PC-9 (cell line): ENCODE measurements at regions of chr4 and their contacts with region 1.

Region 1: DNA sequence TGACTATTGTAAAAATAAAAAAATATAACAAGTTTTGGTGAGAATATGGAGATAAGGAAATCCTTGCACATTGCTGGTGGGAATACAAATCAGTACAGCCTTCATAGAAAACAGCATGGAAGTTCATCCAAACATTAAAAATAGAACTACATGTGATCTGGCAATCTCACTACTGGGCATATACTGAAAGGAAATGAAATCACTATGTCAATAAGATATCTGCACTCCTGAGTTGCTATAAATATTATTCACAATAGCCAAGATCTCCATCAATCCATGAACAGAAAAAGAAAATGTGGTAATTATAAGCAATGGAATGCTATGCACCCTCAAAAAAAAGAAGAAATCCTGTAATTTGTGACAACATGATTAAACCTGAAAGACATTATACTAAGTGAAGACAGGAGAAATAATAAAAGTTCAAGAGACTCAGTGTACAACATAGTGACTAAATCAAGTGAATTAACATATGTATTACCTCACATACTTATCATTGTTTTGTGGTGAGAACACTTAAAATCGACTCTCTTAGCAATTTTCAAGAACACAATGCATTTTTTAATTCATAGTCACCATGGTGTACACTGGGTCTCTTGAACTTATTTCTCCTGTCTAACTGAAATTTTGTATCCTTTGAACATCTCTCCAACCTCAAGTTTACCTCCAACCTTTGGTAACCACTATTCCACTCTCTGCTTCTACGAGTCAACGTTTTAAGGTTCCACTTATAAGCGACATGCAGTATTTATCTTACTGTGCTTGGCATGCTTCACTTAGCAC is 1703.7 kb upstream of the AGA start:
- DNase-seq: no peak
- H3K4me3 ChIP-seq: no peak overlapping the region
- H3K27ac ChIP-seq: no peak overlapping the region
- H3K4me1 ChIP-seq: no peaks in the 10 kb centered on the region
- H3K27me3 ChIP-seq: no peaks in the 10 kb centered on the region
- CTCF ChIP-seq: no peak

Region 2: DNA sequence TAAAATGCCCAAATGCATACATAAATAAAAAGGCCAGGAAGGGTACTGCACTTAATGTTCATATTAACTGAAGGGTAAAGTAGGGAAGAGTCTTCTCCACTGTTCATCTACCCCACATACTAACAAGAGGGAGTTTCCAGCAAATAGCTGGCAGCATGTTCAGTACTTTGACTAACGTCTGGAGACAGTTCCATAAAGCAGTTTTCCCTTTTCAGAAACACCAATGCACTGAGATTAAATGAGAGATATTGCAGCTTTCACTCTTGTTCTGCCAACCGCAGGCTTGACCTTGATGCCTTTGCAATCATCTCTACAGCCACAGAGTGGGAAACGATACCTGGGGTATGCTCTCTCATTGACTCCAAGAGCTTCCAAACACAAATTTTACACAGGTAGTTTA is 974.1 kb after region 1 on chr4:
- CTCF ChIA-PET with region 1: no interaction called
- POLR2A ChIA-PET with region 1: interaction called, 34 read pairs
- intact Hi-C with region 1: no loop called
- DNase-seq: no peak
- H3K4me3 ChIP-seq: no peak overlapping the region
- H3K27ac ChIP-seq: no peak overlapping the region
- H3K4me1 ChIP-seq: no peaks in the 10 kb centered on the region
- H3K27me3 ChIP-seq: no peaks in the 10 kb centered on the region
- CTCF ChIP-seq: no peak